ENCODE measurements at regions of chr4 and their contacts with region 1.

Region 1: DNA sequence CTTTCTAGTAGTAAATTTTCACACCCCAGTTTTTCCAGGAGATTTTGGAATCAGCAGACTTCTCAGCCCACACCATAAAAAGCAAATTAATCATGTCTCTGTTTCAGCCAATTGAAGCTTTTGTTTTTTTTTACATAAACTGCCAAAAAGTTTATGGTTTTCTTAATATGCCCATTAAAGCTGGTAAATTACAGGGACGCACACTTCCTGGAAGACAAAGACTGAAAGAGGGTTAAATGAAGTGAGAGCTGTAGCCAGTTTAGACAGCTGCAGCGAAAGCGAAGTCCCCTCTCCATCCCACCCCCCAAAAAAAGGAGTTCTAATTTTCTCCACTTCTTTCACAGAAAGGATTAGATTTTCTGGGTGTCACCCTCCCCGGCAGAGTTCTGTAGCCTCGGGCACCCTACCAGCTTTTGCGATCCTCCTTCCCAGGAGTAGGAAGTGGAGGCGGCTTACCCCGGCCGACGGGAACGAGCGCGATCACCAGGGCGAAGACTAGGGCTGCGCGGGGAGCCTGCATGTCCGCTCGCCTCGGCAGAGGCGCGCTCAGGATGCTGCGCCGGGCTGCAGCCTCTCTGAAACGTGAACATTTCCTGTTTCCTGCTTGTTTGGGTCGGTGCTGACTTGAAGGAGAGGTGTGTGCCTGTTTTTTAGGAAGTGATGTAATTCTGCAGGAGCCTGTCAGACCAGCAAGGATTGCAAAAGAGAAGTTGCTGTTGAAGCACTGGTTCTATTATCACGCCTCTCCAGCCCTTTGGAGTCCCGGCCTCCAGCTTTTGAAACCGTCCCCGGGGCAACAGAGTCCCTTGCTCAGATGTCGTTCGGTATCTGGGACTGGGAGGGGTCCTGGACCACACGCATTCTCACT is at the start of gene TMEM154:
- DNase-seq: peak; percentile 57 to 85 (median 77)
- ATAC-seq: peak; percentile 95
- H3K4me3 ChIP-seq: peak within 1 kb of the TSS; percentile 81
- H3K4me3 Mint-ChIP-seq: peak within 1 kb of the TSS; percentile 78 to 97 (median 95)
- H3K27ac ChIP-seq: peak within 1 kb of the TSS; percentile 77
- H3K27ac Mint-ChIP-seq: peak within 1 kb of the TSS; percentile 92 to 98 (median 96)
- H3K4me1 ChIP-seq: peaks cover 22% of the 10 kb centered on the region in 2 donors
- H3K4me1 Mint-ChIP-seq: peaks cover 39 to 71% (median 49%) of the 10 kb centered on the region in 7 donors
- H3K27me3 ChIP-seq: no peaks in the 10 kb centered on the region
- H3K27me3 Mint-ChIP-seq: no peaks in the 10 kb centered on the region
- total RNA-seq, gene TMEM154: 21.3 to 46.8 (median 36.9) TPM

Region 2: DNA sequence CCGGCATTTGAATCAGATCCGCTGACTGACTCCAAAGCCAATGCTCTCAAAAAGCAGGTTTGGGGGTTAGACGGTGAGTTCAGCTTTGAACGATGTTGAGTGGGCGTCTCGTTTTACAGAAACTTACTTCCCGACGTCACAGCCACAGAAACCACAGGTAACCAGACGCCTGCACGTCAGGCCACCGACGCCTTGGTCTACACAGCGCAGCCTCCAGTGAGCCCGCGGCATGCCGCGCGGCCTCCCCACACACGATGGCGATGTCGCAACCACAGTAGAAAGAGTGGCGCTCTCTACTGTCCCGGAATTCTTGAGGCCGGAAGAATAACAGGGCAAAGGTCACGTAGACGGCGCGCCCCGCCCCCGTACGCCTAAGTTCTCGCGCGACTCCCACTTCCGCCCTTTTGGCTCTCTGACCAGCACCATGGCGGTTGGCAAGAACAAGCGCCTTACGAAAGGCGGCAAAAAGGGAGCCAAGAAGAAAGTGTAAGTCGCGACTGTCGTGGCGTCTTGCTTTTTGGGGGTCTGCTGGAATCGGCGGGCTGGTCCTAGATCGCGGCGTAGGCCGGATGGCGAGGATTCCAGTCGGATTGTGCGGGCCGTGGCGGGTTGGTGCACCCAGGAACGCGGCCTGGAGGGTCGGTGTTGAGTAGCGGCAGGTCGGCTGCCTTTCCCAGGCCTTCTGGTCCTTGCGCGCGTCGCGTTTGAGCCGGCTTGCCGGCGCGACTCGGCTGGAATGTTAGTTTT is 1580.2 kb before region 1 on chr4 and contains the start of gene RPS3A:
- CTCF ChIA-PET with region 1: no interaction called
- POLR2A ChIA-PET with region 1: interaction called, 5 read pairs
- intact Hi-C with region 1: loop called in 1 of 2 experiments (anchors 1 kb)
- DNase-seq: peak; percentile 95 to 100 (median 99)
- ATAC-seq: peak; percentile 97
- H3K4me3 ChIP-seq: peak within 1 kb of the TSS; percentile 96
- H3K4me3 Mint-ChIP-seq: peak within 1 kb of the TSS; percentile 89 to 99 (median 96)
- H3K27ac ChIP-seq: peak within 1 kb of the TSS; percentile 89
- H3K27ac Mint-ChIP-seq: peak within 1 kb of the TSS; percentile 97 to 99 (median 98)
- H3K4me1 ChIP-seq: peaks cover 14 to 18% of the 10 kb centered on the region in 2 donors
- H3K4me1 Mint-ChIP-seq: peaks cover 24 to 43% (median 28%) of the 10 kb centered on the region in 7 donors
- H3K27me3 ChIP-seq: no peaks in the 10 kb centered on the region
- H3K27me3 Mint-ChIP-seq: peaks cover 0 to 4% (median 0%) of the 10 kb centered on the region in 5 donors
- total RNA-seq, gene RPS3A: 1,723 to 5,358 (median 3,483) TPM

Region 3: GRCh38 chr4:152640058-152640833 is 39.4 kb before region 1 on chr4:
- CTCF ChIA-PET with region 1: interaction called, 4 read pairs
- POLR2A ChIA-PET with region 1: interaction called, 4 read pairs
- intact Hi-C with region 1: loop called (anchors 2 to 5 kb)
- DNase-seq: peak in 6 of 9 donors; percentile 14 to 51 (median 34)
- ATAC-seq: no peak
- H3K4me3 ChIP-seq: no peak overlapping the region
- H3K4me3 Mint-ChIP-seq: no peak overlapping the region
- H3K27ac ChIP-seq: no peak overlapping the region
- H3K27ac Mint-ChIP-seq: peak overlapping the region in 3 of 9 donors; percentile 2 to 63 (median 20)
- H3K4me1 ChIP-seq: peaks cover 0 to 15% of the 10 kb centered on the region in 2 donors
- H3K4me1 Mint-ChIP-seq: peaks cover 0 to 31% (median 9%) of the 10 kb centered on the region in 7 donors
- H3K27me3 ChIP-seq: no peaks in the 10 kb centered on the region
- H3K27me3 Mint-ChIP-seq: no peaks in the 10 kb centered on the region

Region 4: GRCh38 chr4:152696764-152697261 is 17.2 kb after region 1 on chr4:
- CTCF ChIA-PET with region 1: no interaction called
- POLR2A ChIA-PET with region 1: no interaction called
- intact Hi-C with region 1: loop called in 1 of 2 experiments (anchors 1 kb)
- DNase-seq: peak in 1 of 9 donors; percentile 40
- ATAC-seq: peak; percentile 98
- H3K4me3 ChIP-seq: no peak overlapping the region
- H3K4me3 Mint-ChIP-seq: peak overlapping the region in 1 of 10 donors; percentile 10
- H3K27ac ChIP-seq: no peak overlapping the region
- H3K27ac Mint-ChIP-seq: peak overlapping the region in 1 of 9 donors; percentile 29
- H3K4me1 ChIP-seq: peaks cover 0 to 9% of the 10 kb centered on the region in 2 donors
- H3K4me1 Mint-ChIP-seq: peaks cover 0 to 21% (median 0%) of the 10 kb centered on the region in 7 donors
- H3K27me3 ChIP-seq: no peaks in the 10 kb centered on the region
- H3K27me3 Mint-ChIP-seq: peaks cover 0 to 11% (median 1%) of the 10 kb centered on the region in 5 donors

Region 5: GRCh38 chr4:153115322-153116290 is 436.0 kb after region 1 on chr4:
- CTCF ChIA-PET with region 1: no interaction called
- POLR2A ChIA-PET with region 1: no interaction called
- intact Hi-C with region 1: loop called in 1 of 2 experiments (anchors 10 kb)
- DNase-seq: peak in 8 of 9 donors; percentile 64 to 93 (median 89)
- ATAC-seq: peak; percentile 65
- H3K4me3 ChIP-seq: peak overlapping the region; percentile 46
- H3K4me3 Mint-ChIP-seq: peak overlapping the region in 2 of 10 donors; percentile 70 to 79
- H3K27ac ChIP-seq: peak overlapping the region; percentile 84
- H3K27ac Mint-ChIP-seq: no peak overlapping the region
- H3K4me1 ChIP-seq: peaks cover 43 to 62% of the 10 kb centered on the region in 2 donors
- H3K4me1 Mint-ChIP-seq: peaks cover 0 to 26% (median 11%) of the 10 kb centered on the region in 7 donors
- H3K27me3 ChIP-seq: no peaks in the 10 kb centered on the region
- H3K27me3 Mint-ChIP-seq: peaks cover 0 to 9% (median 0%) of the 10 kb centered on the region in 5 donors

Measured in naive thymus-derived CD4-positive, alpha-beta T cell (primary cell).